Caco-2 (cell line): ENCODE measurements at regions of chr19 and their contacts with region 1.

Region 1: GRCh38 chr19:18588611-18589379 is at the start of gene REX1BD:
- DNase-seq: peak; percentile 86 to 89
- H3K4me3 ChIP-seq: peak within 1 kb of the TSS; percentile 89
- H3K4me3 Mint-ChIP-seq: peak within 1 kb of the TSS; percentile 82
- H3K27ac Mint-ChIP-seq: peak within 1 kb of the TSS; percentile 82
- H3K4me1 ChIP-seq: no peaks in the 10 kb centered on the region
- H3K4me1 Mint-ChIP-seq: peaks cover 7% of the 10 kb centered on the region
- H3K27me3 ChIP-seq: no peaks in the 10 kb centered on the region
- H3K27me3 Mint-ChIP-seq: no peaks in the 10 kb centered on the region
- CTCF ChIP-seq: peak; percentile 87 to 92
- total RNA-seq, gene REX1BD: 44.8 and 48.3 TPM in 2 replicates

Region 2: DNA sequence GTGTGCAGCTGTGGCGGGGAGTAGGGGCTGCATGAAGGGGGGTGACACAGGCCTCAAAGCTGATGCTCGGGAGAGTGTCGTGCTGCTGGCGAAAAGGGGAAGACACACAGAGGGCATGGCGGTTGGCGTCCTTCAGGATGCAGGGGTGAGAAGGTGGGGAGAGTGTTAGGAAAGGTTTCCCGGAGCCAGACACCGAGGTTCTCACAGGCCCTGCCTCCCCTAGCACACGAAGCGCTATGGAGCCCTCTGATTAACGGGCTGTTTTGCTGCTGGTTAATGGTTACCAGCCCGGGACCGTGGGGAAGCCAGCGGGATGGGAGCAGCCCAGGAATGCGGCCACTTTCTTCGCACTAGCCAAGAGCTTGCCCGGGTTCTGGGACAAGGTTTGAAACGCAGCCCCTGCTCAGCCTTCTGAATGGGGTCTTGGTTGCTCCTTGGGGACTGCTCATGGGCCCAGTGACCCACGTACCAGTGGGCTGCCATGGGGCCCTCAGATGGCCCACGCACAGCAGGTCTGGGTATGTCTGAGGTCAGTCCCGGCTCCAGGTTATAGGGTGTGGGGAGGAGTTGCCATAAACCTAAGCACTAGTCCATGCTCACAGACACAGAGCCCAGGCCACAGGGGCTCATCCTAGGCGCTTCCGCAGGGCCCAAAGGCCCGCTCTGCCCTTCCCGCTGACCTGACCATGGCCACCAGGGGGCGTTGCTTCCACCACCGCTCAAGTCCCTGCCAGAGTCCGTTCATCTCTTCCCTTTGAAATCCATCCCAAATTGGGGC is 119.5 kb before region 1 on chr19:
- CTCF ChIA-PET with region 1: interaction called, 3 read pairs
- POLR2A ChIA-PET with region 1: interaction called, 3 read pairs
- intact Hi-C with region 1: loop called (anchors 10 kb)
- DNase-seq: peak; percentile 63 to 66
- H3K4me3 ChIP-seq: no peak overlapping the region
- H3K4me3 Mint-ChIP-seq: no peak overlapping the region
- H3K27ac Mint-ChIP-seq: peak overlapping the region; percentile 35
- H3K4me1 ChIP-seq: peaks cover 21% of the 10 kb centered on the region
- H3K4me1 Mint-ChIP-seq: peaks cover 6% of the 10 kb centered on the region
- H3K27me3 ChIP-seq: no peaks in the 10 kb centered on the region
- H3K27me3 Mint-ChIP-seq: no peaks in the 10 kb centered on the region
- CTCF ChIP-seq: peak; percentile 61 to 70

Region 3: DNA sequence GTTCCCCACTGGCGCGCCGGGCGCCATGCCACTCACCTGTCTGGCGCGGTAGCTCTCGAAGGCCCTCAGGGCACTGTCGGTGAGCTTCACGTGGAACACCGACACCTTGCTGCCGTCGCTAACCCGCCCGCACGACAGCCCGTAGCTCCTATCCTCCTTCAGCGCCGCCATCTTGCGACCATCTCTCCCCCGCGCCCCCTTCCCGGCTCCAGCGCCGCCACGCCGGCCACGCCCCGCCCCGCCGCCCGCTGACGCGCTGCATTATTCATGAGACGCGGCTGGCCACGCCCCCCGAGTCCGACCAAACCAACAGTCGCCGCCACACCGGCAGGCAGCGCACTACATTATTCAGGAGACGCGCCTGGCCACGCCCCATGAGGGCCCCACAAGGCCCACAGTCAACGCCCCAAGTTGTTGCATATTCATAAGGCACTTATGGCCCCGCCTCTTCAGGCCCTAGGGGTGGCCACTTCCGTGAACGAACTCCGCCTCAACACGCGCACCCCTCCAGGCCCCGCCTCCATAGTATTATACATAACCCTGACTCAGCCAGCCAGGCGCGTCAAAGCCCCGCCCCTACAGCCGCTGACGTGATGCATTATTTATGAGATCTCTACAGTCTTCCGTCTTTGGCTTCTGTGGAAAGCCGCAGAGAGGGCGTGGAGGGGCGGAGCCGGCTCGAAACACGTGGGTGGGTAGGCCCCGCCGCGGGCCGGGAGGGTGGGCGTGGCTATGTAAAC is 66.7 kb before region 1 on chr19 and contains the start of gene ELL:
- CTCF ChIA-PET with region 1: interaction called, 13 read pairs
- POLR2A ChIA-PET with region 1: interaction called, 11 read pairs
- intact Hi-C with region 1: loop called (anchors 1 kb)
- DNase-seq: peak; percentile 99 to 100
- H3K4me3 ChIP-seq: peak within 1 kb of the TSS; percentile 90
- H3K4me3 Mint-ChIP-seq: peak within 1 kb of the TSS; percentile 81
- H3K27ac Mint-ChIP-seq: peak within 1 kb of the TSS; percentile 89
- H3K4me1 ChIP-seq: peaks cover 5% of the 10 kb centered on the region
- H3K4me1 Mint-ChIP-seq: no peaks in the 10 kb centered on the region
- H3K27me3 ChIP-seq: no peaks in the 10 kb centered on the region
- H3K27me3 Mint-ChIP-seq: no peaks in the 10 kb centered on the region
- CTCF ChIP-seq: peak in 1 of 2 experiments; percentile 14
- total RNA-seq, gene ELL: 11.2 and 12.1 TPM in 2 replicates

Region 4: DNA sequence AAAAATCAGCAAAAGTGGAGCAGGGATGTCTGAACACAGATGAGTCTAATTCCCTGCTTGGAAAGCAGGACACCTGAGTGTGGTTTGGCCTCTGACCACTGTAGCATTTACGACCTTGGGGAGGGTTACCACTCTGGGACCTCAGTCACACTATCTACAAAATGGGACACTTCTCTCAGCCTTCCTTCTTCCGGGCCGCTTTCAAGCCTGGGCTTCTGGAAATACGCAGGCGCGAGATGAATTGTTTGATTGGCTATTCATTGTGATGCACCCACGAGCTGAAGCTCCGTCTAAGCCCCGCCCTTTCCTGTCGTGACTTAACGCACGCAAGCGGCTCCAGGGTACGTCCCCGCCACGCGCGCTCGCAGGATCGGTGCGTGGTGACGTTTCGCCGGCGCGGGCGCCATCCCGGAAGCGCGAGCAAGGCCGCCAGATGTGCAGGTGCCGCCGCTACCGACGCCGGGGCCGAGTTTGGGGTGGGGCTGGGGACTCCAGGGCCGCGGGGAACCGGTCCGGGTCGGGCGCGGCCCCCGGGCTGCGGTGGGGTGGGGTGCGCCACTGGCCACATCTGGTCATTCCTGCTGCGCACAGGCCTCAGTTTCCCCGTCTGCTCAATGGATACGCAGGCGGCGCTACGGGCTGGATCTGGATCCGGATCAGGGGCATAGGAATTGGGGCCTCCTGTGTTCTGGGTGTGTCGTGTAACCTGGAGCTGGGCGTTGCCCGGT is 31.2 kb before region 1 on chr19 and contains the start of gene KXD1:
- CTCF ChIA-PET with region 1: interaction called, 7 read pairs
- POLR2A ChIA-PET with region 1: interaction called, 12 read pairs
- intact Hi-C with region 1: no loop called
- DNase-seq: peak; percentile 91 to 97
- H3K4me3 ChIP-seq: peak within 1 kb of the TSS; percentile 98
- H3K4me3 Mint-ChIP-seq: peak within 1 kb of the TSS; percentile 70
- H3K27ac Mint-ChIP-seq: peak within 1 kb of the TSS; percentile 60
- H3K4me1 ChIP-seq: no peaks in the 10 kb centered on the region
- H3K4me1 Mint-ChIP-seq: no peaks in the 10 kb centered on the region
- H3K27me3 ChIP-seq: no peaks in the 10 kb centered on the region
- H3K27me3 Mint-ChIP-seq: no peaks in the 10 kb centered on the region
- CTCF ChIP-seq: no peak
- total RNA-seq, gene KXD1: 77.5 and 80.2 TPM in 2 replicates

Region 5: GRCh38 chr19:18571564-18572300 is 17.1 kb before region 1 on chr19 and contains the start of gene UBA52:
- CTCF ChIA-PET with region 1: interaction called, 17 read pairs
- POLR2A ChIA-PET with region 1: interaction called, 4 read pairs
- intact Hi-C with region 1: no loop called
- DNase-seq: peak; percentile 97 to 98
- H3K4me3 ChIP-seq: peak within 1 kb of the TSS; percentile 98
- H3K4me3 Mint-ChIP-seq: peak within 1 kb of the TSS; percentile 93
- H3K27ac Mint-ChIP-seq: peak within 1 kb of the TSS; percentile 98
- H3K4me1 ChIP-seq: peaks cover 9% of the 10 kb centered on the region; the same call in 1 of the 2 replicates
- H3K4me1 Mint-ChIP-seq: peaks cover 11% of the 10 kb centered on the region
- H3K27me3 ChIP-seq: no peaks in the 10 kb centered on the region
- H3K27me3 Mint-ChIP-seq: no peaks in the 10 kb centered on the region
- CTCF ChIP-seq: no peak
- total RNA-seq, gene UBA52: 1,276 and 1,389 TPM in 2 replicates

Region 6: GRCh38 chr19:18613589-18614234 is 24.9 kb after region 1 on chr19:
- CTCF ChIA-PET with region 1: no interaction called
- POLR2A ChIA-PET with region 1: no interaction called
- intact Hi-C with region 1: no loop called
- DNase-seq: no peak
- H3K4me3 ChIP-seq: no peak overlapping the region
- H3K4me3 Mint-ChIP-seq: peak overlapping the region; percentile 70
- H3K27ac Mint-ChIP-seq: no peak overlapping the region
- H3K4me1 ChIP-seq: peaks cover 27% of the 10 kb centered on the region
- H3K4me1 Mint-ChIP-seq: peaks cover 13% of the 10 kb centered on the region
- H3K27me3 ChIP-seq: peaks cover 11% of the 10 kb centered on the region
- H3K27me3 Mint-ChIP-seq: peaks cover 25% of the 10 kb centered on the region
- CTCF ChIP-seq: no peak

Region 7: GRCh38 chr19:18636183-18636968 is 47.6 kb after region 1 on chr19:
- CTCF ChIA-PET with region 1: interaction called, 5 read pairs
- POLR2A ChIA-PET with region 1: no interaction called
- intact Hi-C with region 1: loop called (anchors 2 kb)
- DNase-seq: peak; percentile 98 to 99
- H3K4me3 ChIP-seq: peak overlapping the region; percentile 98
- H3K4me3 Mint-ChIP-seq: peak overlapping the region; percentile 76
- H3K27ac Mint-ChIP-seq: peak overlapping the region; percentile 69
- H3K4me1 ChIP-seq: peaks cover 15% of the 10 kb centered on the region
- H3K4me1 Mint-ChIP-seq: peaks cover 15% of the 10 kb centered on the region
- H3K27me3 ChIP-seq: no peaks in the 10 kb centered on the region
- H3K27me3 Mint-ChIP-seq: peaks cover 6% of the 10 kb centered on the region
- CTCF ChIP-seq: no peak

Region 8: GRCh38 chr19:18846862-18847548 is 258.2 kb after region 1 on chr19:
- CTCF ChIA-PET with region 1: interaction called, 17 read pairs
- POLR2A ChIA-PET with region 1: no interaction called
- intact Hi-C with region 1: loop called (anchors 5 kb)
- DNase-seq: peak in 1 of 2 experiments; percentile 74
- H3K4me3 ChIP-seq: no peak overlapping the region
- H3K4me3 Mint-ChIP-seq: no peak overlapping the region
- H3K27ac Mint-ChIP-seq: peak overlapping the region; percentile 61
- H3K4me1 ChIP-seq: no peaks in the 10 kb centered on the region
- H3K4me1 Mint-ChIP-seq: peaks cover 4% of the 10 kb centered on the region
- H3K27me3 ChIP-seq: no peaks in the 10 kb centered on the region
- H3K27me3 Mint-ChIP-seq: no peaks in the 10 kb centered on the region
- CTCF ChIP-seq: peak; percentile 71 to 86